Naive thymus-derived CD4-positive, alpha-beta T cell (primary cell): ENCODE measurements at regions of chr7 and their contacts with region 1.

Region 1: DNA sequence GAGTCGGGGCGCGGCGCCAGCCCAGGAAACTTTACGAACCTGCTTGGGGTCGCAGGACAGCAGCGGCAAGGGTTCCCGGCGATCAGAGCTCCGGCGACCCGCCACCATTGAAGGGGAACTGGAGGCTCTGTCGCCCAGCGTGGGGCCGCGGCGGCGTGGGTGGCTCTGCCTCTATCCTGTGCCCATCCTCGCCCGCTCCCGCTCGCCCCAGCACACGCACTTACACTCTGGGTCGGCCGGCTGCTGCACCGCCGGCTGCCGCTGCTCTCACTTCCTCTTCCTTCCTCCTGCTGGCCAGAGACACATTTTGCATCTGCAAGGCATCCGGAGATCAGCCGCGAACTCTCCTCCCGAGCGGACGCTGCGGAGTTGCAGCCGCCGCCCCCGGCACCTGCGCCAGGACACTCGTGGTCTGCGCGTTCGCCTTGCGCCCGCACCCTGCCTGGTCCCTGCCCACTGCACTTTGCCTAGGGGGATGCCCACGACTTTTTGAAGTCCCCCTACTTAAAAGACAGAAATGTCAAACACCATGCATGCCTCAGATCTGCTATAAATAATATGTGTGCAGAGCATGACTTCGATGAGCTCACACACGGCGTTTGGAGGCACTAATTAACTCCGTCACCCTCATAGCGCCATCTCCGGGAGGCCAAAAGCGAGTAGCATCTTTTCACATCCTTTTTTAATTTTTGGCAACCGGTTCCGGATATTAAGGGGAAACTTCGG is at the start of gene ELMO1:
- DNase-seq: peak; percentile 63 to 87 (median 86)
- ATAC-seq: peak; percentile 83
- H3K4me3 ChIP-seq: peak within 1 kb of the TSS; percentile 83
- H3K4me3 Mint-ChIP-seq: peak within 1 kb of the TSS; percentile 94 to 99 (median 97)
- H3K27ac ChIP-seq: peak within 1 kb of the TSS; percentile 89
- H3K27ac Mint-ChIP-seq: peak within 1 kb of the TSS; percentile 97 to 100 (median 99)
- H3K4me1 ChIP-seq: peaks cover 8 to 29% of the 10 kb centered on the region in 2 donors
- H3K4me1 Mint-ChIP-seq: peaks cover 21 to 62% (median 54%) of the 10 kb centered on the region in 7 donors
- H3K27me3 ChIP-seq: no peaks in the 10 kb centered on the region
- H3K27me3 Mint-ChIP-seq: peaks cover 0 to 10% (median 0%) of the 10 kb centered on the region in 5 donors
- total RNA-seq, gene ELMO1: 119 to 160 (median 126) TPM

Region 2: DNA sequence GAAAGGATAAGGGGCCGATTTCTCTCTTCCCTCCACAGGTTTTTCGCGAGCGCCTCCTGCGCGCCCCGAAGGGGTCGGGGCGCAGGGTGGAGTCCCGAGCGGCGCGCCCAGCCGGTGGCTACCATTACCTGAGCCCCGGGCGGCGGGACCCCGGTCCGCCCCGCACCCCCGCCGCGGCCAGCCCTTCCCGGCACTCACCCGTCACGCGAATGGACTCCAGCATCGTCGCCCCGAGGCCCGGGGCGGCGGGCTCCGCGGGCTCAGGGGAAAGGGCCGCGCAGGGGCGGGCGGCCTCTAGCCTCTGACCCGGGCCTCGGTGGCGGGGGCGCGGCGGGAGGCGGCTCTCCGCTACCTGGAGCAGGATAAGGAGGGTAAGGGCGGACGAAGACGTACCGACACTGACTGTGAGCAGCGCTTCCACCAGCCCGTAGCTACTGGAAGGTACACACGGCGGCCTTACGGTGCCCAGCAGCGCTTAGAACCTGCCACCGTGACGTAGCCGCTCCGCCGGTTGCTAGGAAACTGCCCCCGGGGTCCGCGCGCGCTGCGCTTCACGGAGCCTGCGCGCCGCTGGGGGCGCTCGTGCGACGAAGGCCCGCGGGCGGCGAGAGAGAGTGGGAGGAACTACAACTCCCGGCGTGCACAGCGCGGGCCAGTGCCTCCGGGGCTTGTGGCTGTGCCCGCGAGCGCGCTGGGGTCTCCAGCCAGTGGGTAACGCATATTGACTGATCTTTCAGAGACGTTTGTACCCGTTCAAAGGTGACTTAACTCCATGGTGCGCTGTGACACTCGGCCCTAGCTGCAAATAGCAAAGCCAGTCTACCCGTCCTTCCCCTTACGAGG is 1081.9 kb before region 1 on chr7:
- CTCF ChIA-PET with region 1: no interaction called
- POLR2A ChIA-PET with region 1: no interaction called
- intact Hi-C with region 1: loop called (anchors 2 to 10 kb)
- DNase-seq: peak; percentile 84 to 92 (median 91)
- ATAC-seq: peak; percentile 98
- H3K4me3 ChIP-seq: peak overlapping the region; percentile 76
- H3K4me3 Mint-ChIP-seq: peak overlapping the region; percentile 80 to 97 (median 93)
- H3K27ac ChIP-seq: peak overlapping the region; percentile 70
- H3K27ac Mint-ChIP-seq: peak overlapping the region in 8 of 9 donors; percentile 51 to 94 (median 82)
- H3K4me1 ChIP-seq: peaks cover 0 to 5% of the 10 kb centered on the region in 2 donors
- H3K4me1 Mint-ChIP-seq: peaks cover 0 to 8% (median 5%) of the 10 kb centered on the region in 7 donors
- H3K27me3 ChIP-seq: no peaks in the 10 kb centered on the region
- H3K27me3 Mint-ChIP-seq: peaks cover 0 to 57% (median 0%) of the 10 kb centered on the region in 5 donors

Region 3: DNA sequence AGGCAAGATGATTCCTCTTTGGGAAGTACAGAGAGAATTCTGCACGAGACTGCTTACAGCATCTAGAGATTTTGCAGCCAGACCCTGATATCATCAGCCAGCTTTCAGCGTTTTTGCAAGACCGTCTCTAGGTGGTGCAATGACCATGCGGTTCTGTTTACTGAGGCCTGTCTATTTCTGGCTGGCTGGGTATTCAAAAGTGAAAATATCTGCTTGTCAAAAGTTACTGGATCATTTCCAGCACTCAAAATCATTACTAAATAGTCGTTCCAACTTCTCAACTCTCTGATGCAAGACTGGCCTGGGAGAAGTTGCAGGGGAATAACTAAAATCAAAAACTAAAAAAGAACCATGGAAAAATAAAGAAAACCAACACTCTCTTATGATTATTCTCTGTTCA is 240.3 kb before region 1 on chr7:
- CTCF ChIA-PET with region 1: interaction called, 3 read pairs
- POLR2A ChIA-PET with region 1: no interaction called
- intact Hi-C with region 1: loop called (anchors 1 to 2 kb)
- DNase-seq: peak in 7 of 9 donors; percentile 17 to 56 (median 33)
- ATAC-seq: peak; percentile 77
- H3K4me3 ChIP-seq: no peak overlapping the region
- H3K4me3 Mint-ChIP-seq: no peak overlapping the region
- H3K27ac ChIP-seq: no peak overlapping the region
- H3K27ac Mint-ChIP-seq: peak overlapping the region; percentile 25 to 89 (median 71)
- H3K4me1 ChIP-seq: no peaks in the 10 kb centered on the region
- H3K4me1 Mint-ChIP-seq: peaks cover 0 to 17% (median 8%) of the 10 kb centered on the region in 7 donors
- H3K27me3 ChIP-seq: no peaks in the 10 kb centered on the region
- H3K27me3 Mint-ChIP-seq: no peaks in the 10 kb centered on the region

Region 4: GRCh38 chr7:37342688-37343471 is 105.9 kb before region 1 on chr7:
- CTCF ChIA-PET with region 1: interaction called, 3 read pairs
- POLR2A ChIA-PET with region 1: interaction called, 48 read pairs
- intact Hi-C with region 1: loop called (anchors 1 kb)
- DNase-seq: peak; percentile 44 to 82 (median 73)
- ATAC-seq: peak; percentile 93
- H3K4me3 ChIP-seq: peak overlapping the region; percentile 55
- H3K4me3 Mint-ChIP-seq: peak overlapping the region; percentile 78 to 98 (median 88)
- H3K27ac ChIP-seq: peak overlapping the region; percentile 69
- H3K27ac Mint-ChIP-seq: peak overlapping the region; percentile 92 to 99 (median 95)
- H3K4me1 ChIP-seq: peaks cover 17 to 51% of the 10 kb centered on the region in 2 donors
- H3K4me1 Mint-ChIP-seq: peaks cover 33 to 93% (median 75%) of the 10 kb centered on the region in 7 donors
- H3K27me3 ChIP-seq: no peaks in the 10 kb centered on the region
- H3K27me3 Mint-ChIP-seq: no peaks in the 10 kb centered on the region

Region 5: DNA sequence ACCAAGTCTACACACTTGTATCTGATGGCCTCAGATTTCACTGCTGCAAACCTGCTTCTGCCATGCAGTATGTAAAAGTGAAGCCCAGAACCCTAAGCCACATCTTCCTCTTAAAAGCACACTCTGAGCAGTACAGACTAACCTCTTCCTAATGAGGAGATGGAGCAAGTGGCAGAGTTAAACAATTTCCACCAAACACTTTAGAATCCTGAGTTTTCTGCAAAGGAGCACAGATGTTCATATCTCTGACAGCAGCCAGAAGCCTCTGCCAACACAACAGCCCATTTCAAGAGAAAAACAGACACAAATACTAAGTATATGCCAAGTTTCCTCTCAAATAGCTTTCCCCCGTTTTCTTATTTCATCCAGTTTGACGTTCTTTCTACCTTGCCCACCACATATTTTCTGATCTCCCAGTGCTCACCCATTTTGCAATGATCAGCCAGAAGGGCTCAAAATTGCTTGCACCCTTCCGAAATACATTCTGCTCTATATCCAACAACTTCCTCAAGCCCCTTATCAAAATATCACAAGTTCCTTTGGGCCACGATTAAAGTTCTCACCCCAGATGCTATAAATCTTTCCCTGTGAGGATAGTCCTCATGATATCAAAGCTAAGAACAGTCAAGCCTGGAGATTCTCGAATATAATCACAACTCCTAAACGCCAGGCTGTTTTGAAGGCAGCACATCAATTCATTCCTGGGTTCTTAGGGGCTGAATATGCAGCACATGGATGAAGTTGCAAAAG is 27.7 kb before region 1 on chr7:
- CTCF ChIA-PET with region 1: interaction called, 4 read pairs
- POLR2A ChIA-PET with region 1: interaction called, 15 read pairs
- intact Hi-C with region 1: no loop called
- DNase-seq: no peak
- ATAC-seq: no peak
- H3K4me3 ChIP-seq: no peak overlapping the region
- H3K4me3 Mint-ChIP-seq: peak overlapping the region in 2 of 10 donors; percentile 2 to 4
- H3K27ac ChIP-seq: no peak overlapping the region
- H3K27ac Mint-ChIP-seq: peak overlapping the region in 7 of 9 donors; percentile 4 to 64 (median 19)
- H3K4me1 ChIP-seq: peaks cover 0 to 12% of the 10 kb centered on the region in 2 donors
- H3K4me1 Mint-ChIP-seq: peaks cover 31 to 68% (median 61%) of the 10 kb centered on the region in 7 donors
- H3K27me3 ChIP-seq: no peaks in the 10 kb centered on the region
- H3K27me3 Mint-ChIP-seq: no peaks in the 10 kb centered on the region

Region 6: DNA sequence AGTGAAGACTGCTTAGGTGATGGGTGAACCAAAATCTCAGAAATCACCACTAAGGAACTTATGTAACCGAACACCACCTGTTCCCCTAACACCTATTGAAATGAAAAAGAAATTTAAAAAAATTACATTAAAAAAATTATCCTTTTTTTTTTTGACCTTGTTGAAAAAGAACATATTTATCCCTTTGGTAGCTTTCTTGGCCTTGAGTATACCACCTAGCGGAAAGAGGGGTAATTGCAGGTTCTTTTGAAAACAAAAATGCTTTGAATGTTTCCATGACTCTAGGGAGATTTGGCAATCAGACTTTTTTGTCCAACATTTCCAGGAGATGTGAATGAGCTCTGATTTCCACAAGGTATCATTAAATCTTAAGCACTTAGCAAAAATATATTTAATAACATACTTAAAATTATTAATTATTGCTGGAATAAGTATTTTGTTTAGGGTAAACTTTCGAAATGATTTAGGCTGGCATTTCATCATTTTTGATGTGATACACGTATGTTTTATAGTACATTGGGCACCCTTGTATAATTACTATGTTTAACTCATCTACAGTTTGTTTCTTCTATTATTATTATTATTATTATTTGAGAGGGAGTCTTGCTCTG is 46.9 kb after region 1 on chr7:
- CTCF ChIA-PET with region 1: interaction called, 5 read pairs
- POLR2A ChIA-PET with region 1: interaction called, 5 read pairs
- intact Hi-C with region 1: loop called (anchors 1 kb)
- DNase-seq: peak in 6 of 9 donors; percentile 16 to 46 (median 36)
- ATAC-seq: peak; percentile 60
- H3K4me3 ChIP-seq: no peak overlapping the region
- H3K4me3 Mint-ChIP-seq: no peak overlapping the region
- H3K27ac ChIP-seq: no peak overlapping the region
- H3K27ac Mint-ChIP-seq: no peak overlapping the region
- H3K4me1 ChIP-seq: no peaks in the 10 kb centered on the region
- H3K4me1 Mint-ChIP-seq: peaks cover 0 to 6% (median 0%) of the 10 kb centered on the region in 7 donors
- H3K27me3 ChIP-seq: no peaks in the 10 kb centered on the region
- H3K27me3 Mint-ChIP-seq: no peaks in the 10 kb centered on the region